ENCODE measurements at regions of chr1 and their contacts with region 1.

Region 1: GRCh38 chr1:53485478-53486394 is 26.5 kb downstream of the DMRTB1 start:
- DNase-seq: peak; percentile 51 to 64
- ATAC-seq: peak; percentile 84 to 96
- H3K4me3 ChIP-seq: no peak overlapping the region
- H3K27ac ChIP-seq: no peak overlapping the region
- H3K4me1 ChIP-seq: no peaks in the 10 kb centered on the region
- H3K27me3 ChIP-seq: peaks cover 8 to 18% (median 13%) of the 10 kb centered on the region in 3 donors
- CTCF ChIP-seq: peak; percentile 65 to 88 (median 82)
- POLR2A ChIP-seq: no peak

Region 2: GRCh38 chr1:53285969-53286760 is 199.6 kb before region 1 on chr1:
- in situ Hi-C with region 1: no loop called
- intact Hi-C with region 1: no loop called
- DNase-seq: no peak
- ATAC-seq: no peak
- H3K4me3 ChIP-seq: no peak overlapping the region
- H3K27ac ChIP-seq: no peak overlapping the region
- H3K4me1 ChIP-seq: no peaks in the 10 kb centered on the region
- H3K27me3 ChIP-seq: no peaks in the 10 kb centered on the region
- CTCF ChIP-seq: no peak
- POLR2A ChIP-seq: no peak

Region 3: DNA sequence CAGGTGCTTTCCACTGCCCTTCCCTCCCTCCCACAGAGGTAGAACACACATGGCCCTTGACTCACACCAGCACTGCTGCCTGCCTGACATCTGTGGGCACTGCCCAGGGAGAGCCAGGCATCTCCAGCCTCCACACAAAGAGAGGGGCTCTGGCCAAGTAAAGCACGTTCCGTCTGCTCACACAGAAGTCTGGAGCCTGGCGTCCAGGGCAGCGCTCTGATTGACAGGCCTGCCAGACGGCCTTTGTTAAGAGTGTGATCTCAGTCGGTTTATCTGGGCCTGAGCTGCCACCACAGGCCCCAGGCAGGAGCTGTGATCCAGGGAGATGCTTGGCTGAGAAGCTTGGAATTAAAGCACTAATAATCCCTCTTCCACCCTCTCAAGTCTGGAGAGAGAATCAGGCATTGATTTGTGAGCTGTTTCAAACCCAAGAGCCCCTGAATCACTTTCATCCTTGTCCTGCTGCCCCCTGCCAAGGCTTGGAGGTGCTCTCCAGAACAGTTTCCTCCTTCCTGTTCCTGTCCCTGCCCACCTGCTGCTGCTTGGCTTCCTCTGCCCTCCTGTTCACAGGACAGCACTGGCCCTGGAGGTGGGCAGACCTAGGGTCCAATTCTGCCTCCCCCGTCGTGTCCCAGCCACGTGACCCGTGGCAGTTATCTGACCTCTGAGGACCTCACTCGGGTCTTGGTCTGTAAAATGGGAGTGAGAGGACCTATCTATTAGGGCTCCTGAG is 22.8 kb before region 1 on chr1:
- in situ Hi-C with region 1: no loop called
- intact Hi-C with region 1: no loop called
- DNase-seq: no peak
- ATAC-seq: no peak
- H3K4me3 ChIP-seq: no peak overlapping the region
- H3K27ac ChIP-seq: no peak overlapping the region
- H3K4me1 ChIP-seq: no peaks in the 10 kb centered on the region
- H3K27me3 ChIP-seq: no peaks in the 10 kb centered on the region
- CTCF ChIP-seq: no peak
- POLR2A ChIP-seq: no peak

Region 4: GRCh38 chr1:53592521-53592982 is 106.8 kb after region 1 on chr1:
- in situ Hi-C with region 1: loop called in 1 of 4 experiments (anchors 10 kb)
- intact Hi-C with region 1: no loop called
- DNase-seq: no peak
- ATAC-seq: no peak
- H3K4me3 ChIP-seq: no peak overlapping the region
- H3K27ac ChIP-seq: no peak overlapping the region
- H3K4me1 ChIP-seq: no peaks in the 10 kb centered on the region
- H3K27me3 ChIP-seq: no peaks in the 10 kb centered on the region
- CTCF ChIP-seq: no peak
- POLR2A ChIP-seq: no peak

Region 5: DNA sequence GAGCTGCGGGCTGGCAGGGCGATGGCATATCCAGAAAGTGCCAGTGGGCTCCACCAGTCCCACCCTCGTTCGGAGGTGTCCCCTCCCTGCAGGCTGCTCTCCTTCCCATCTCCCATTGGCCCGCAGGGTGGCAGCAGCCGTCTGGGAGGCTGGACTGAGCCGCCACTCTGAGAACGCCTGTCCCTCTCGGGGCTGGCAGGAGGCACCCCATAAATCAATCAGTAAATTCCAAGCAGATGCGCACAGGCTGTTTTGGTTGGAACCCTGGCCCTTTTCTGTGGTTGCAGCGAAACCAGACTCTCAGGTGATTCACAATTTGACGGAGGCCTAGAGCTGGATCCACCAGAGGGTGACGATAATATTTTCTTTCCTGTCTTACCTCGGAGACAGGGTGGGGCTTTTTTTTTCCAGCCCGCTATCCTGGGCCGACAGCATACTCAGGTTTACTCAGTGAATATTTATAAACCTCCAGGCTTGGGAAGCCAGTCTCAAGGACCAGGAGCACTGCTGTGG is 153.6 kb after region 1 on chr1:
- in situ Hi-C with region 1: no loop called
- intact Hi-C with region 1: loop called (anchors 1 kb)
- DNase-seq: peak in 1 of 2 donors; percentile 48
- ATAC-seq: peak; percentile 84
- H3K4me3 ChIP-seq: no peak overlapping the region
- H3K27ac ChIP-seq: peak overlapping the region in 1 of 4 donors; percentile 24
- H3K4me1 ChIP-seq: no peaks in the 10 kb centered on the region
- H3K27me3 ChIP-seq: no peaks in the 10 kb centered on the region
- CTCF ChIP-seq: peak in 2 of 5 experiments; percentile 13 to 43
- POLR2A ChIP-seq: no peak

Region 6: DNA sequence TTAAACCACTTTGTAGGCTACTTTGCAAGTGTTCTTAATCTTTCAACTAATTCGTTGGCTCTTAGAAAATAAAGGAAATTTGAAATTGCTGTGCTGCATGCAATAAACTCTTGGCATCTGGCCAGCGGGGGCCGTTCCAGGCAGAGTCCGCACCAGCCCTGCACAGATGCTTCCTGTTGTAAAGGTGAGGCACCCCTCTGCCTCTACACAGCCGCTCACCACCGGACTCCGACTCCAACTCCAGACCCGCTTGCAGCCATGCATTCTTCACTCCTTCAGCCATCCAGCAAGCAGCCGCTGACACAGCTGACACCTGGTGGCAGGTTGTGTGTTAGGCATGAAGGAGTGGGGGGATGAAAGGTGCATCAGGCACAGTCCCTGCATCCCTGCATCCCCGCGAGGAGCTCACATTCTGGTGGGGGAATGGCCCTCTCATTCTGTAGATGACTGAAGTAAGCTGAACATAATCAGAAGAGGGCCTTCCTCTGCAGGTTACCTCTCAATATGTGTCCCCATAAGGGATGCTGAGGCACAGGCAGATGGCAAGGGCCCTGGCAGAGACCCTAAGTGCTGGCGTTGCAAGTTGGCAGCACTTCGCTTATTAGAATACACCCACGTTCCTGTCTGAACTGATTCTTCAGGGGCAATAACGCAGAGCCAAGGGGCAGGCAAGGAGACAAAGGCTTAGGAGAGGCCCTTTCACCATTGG is 196.4 kb after region 1 on chr1:
- in situ Hi-C with region 1: loop called in 2 of 4 experiments (anchors 10 to 25 kb)
- intact Hi-C with region 1: loop called (anchors 1 kb)
- DNase-seq: peak in 1 of 2 donors; percentile 25
- ATAC-seq: peak in 1 of 2 donors; percentile 55
- H3K4me3 ChIP-seq: no peak overlapping the region
- H3K27ac ChIP-seq: no peak overlapping the region
- H3K4me1 ChIP-seq: no peaks in the 10 kb centered on the region
- H3K27me3 ChIP-seq: peaks cover 12 to 23% (median 17%) of the 10 kb centered on the region in 3 donors
- CTCF ChIP-seq: peak; percentile 39 to 60 (median 48)
- POLR2A ChIP-seq: no peak

Region 7: DNA sequence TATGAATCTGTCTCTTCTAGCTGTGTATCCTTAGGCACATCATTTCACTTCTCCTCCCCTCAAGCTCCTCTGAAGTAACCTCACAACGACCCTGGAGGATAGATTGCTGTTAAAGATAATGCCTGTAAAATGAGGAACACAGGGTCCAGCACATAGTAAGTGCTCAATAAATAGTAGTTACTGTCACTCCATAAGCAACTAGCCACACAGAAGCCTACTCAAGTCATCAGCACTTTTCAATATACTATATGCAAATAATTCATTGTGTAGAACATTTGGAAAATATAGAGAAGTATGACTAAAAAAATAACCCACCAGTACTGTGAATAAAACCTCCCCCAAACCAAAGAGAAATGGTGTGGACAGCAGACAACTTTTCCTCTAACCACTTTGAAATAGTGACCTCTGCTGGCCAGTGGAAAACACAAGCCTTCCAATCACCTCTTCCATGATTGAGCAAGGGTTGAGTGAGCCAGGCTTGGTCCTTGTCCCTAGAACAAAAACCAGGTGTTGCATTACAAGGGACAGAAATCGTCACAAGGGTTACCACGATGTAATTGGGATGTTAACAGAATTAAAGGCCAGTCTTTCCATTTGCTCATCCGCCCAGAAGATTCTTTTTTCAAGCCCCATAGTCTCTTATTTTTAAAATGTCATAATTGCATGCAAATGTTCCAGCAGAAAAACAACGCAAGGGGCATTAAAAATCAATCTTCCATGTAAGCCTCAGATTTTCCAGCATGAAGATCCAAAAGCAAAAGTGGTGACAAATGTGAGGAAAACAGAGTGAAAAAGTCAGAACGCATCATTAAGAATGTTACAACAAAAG is 269.0 kb after region 1 on chr1:
- in situ Hi-C with region 1: loop called (anchors 10 kb)
- intact Hi-C with region 1: loop called (anchors 1 kb)
- DNase-seq: peak in 1 of 2 donors; percentile 26
- ATAC-seq: peak; percentile 54 to 84
- H3K4me3 ChIP-seq: no peak overlapping the region
- H3K27ac ChIP-seq: no peak overlapping the region
- H3K4me1 ChIP-seq: no peaks in the 10 kb centered on the region
- H3K27me3 ChIP-seq: no peaks in the 10 kb centered on the region
- CTCF ChIP-seq: peak; percentile 39 to 67 (median 48)
- POLR2A ChIP-seq: no peak

Measured in gastrocnemius medialis (tissue), 4 donors.